Heart right ventricle (tissue), 16 donors: ENCODE measurements at regions of chr5 and their contacts with region 1.

Region 1: GRCh38 chr5:168006456-168007130 is 284.9 kb upstream of the WWC1 start:
- DNase-seq: peak in 1 of 2 donors; percentile 11
- ATAC-seq: peak; percentile 55 to 88 (median 74)
- H3K4me3 ChIP-seq: no peak overlapping the region
- H3K27ac ChIP-seq: peak overlapping the region in 8 of 10 donors; percentile 45 to 76 (median 62)
- H3K4me1 ChIP-seq: peaks cover 0 to 69% (median 25%) of the 10 kb centered on the region in 9 donors
- H3K27me3 ChIP-seq: no peaks in the 10 kb centered on the region
- CTCF ChIP-seq: no peak

Region 2: DNA sequence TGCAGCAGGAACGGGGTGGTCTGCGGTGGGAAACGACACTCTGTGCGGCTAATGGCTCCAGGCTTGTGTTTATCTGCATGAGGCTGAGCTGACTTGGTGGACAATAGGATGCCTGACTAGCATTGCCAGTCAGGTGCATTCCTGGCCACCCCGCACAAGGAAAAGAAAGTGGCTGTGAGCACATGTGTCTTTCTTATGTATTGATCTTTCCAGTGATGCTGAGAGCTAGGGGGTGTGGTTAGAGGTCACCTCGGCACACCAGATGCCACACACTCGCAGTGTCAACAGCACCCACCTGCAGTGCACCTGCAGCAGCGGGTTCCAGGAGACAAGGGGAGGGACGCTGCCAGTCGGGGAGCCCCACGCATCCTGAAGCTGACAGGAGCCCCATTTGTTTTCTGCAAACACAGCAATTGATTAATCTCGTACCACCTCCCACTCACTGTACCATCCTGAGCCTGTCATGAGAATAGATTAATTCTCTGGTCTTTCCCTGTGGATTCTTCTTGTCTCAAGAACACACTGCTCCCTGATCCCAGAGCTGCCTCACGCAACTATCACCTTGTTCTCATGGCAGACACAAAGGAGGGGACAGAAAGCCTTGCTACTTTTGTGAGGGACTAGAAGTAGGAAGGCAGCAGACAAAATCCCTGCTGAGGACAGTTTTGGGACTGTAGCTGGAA is 33.1 kb after region 1 on chr5:
- intact Hi-C with region 1: loop called in 1 of 10 experiments (anchors 1 kb)
- DNase-seq: no peak
- ATAC-seq: no peak
- H3K4me3 ChIP-seq: no peak overlapping the region
- H3K27ac ChIP-seq: no peak overlapping the region
- H3K4me1 ChIP-seq: peaks cover 0 to 11% (median 0%) of the 10 kb centered on the region in 9 donors
- H3K27me3 ChIP-seq: no peaks in the 10 kb centered on the region
- CTCF ChIP-seq: no peak